ENCODE measurements at regions of chr11 and their contacts with region 1.

Region 1: GRCh38 chr11:63945477-63946163 is 6.8 kb downstream of the NAA40 start:
- DNase-seq: peak; percentile 27
- H3K4me3 ChIP-seq: no peak overlapping the region
- H3K27ac ChIP-seq: peak overlapping the region; percentile 21
- H3K27me3 ChIP-seq: no peaks in the 10 kb centered on the region
- CTCF ChIP-seq: peak; percentile 69

Region 2: GRCh38 chr11:63768237-63769043 is 177.2 kb before region 1 on chr11 and contains the start of gene ZFTA:
- CTCF ChIA-PET with region 1: interaction called, 11 read pairs
- POLR2A ChIA-PET with region 1: interaction called, 4 read pairs
- DNase-seq: no peak
- H3K4me3 ChIP-seq: peak within 1 kb of the TSS; percentile 80
- H3K27ac ChIP-seq: peak within 1 kb of the TSS; percentile 65
- H3K27me3 ChIP-seq: no peaks in the 10 kb centered on the region
- CTCF ChIP-seq: peak; percentile 41; the same call in 1 of the 2 replicates
- polyA plus RNA-seq, gene ZFTA: 8.3 and 8.6 TPM in 2 replicates

Region 3: DNA sequence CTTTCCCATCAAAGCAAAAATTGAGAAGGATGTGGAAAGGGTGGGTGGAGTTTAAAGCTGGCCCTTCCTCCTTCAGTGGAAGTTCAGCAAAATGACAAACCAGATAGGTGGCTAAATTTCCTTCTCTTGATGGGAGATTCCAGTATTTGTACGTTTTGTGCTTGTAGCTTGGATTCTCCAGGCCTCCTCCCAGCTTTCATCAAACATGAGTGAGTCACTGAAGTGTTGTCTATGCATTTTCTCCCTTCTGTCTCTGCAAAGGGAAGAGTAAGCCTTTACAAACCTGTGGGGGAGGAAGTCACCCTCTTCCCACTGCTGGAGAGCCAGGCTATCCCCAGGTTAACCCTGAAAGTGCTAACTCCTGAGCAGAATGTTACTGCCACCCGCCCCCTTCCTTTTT is 100.3 kb before region 1 on chr11:
- CTCF ChIA-PET with region 1: interaction called, 10 read pairs
- POLR2A ChIA-PET with region 1: interaction called, 3 read pairs
- DNase-seq: peak; percentile 47
- H3K4me3 ChIP-seq: no peak overlapping the region
- H3K27ac ChIP-seq: peak overlapping the region; percentile 68
- H3K27me3 ChIP-seq: no peaks in the 10 kb centered on the region
- CTCF ChIP-seq: no peak

Region 4: GRCh38 chr11:63916837-63917691 is 28.6 kb before region 1 on chr11 and contains the start of gene RCOR2:
- CTCF ChIA-PET with region 1: interaction called, 13 read pairs
- POLR2A ChIA-PET with region 1: interaction called, 4 read pairs
- DNase-seq: peak; percentile 69
- H3K4me3 ChIP-seq: peak within 1 kb of the TSS; percentile 63
- H3K27ac ChIP-seq: peak within 1 kb of the TSS; percentile 47
- H3K27me3 ChIP-seq: no peaks in the 10 kb centered on the region
- CTCF ChIP-seq: no peak
- polyA plus RNA-seq, gene RCOR2: 4.4 and 5.2 TPM in 2 replicates

Region 5: GRCh38 chr11:63961608-63962412 is 16.2 kb after region 1 on chr11:
- CTCF ChIA-PET with region 1: interaction called, 17 read pairs
- POLR2A ChIA-PET with region 1: interaction called, 4 read pairs
- DNase-seq: no peak
- H3K4me3 ChIP-seq: no peak overlapping the region
- H3K27ac ChIP-seq: peak overlapping the region; percentile 21
- H3K27me3 ChIP-seq: no peaks in the 10 kb centered on the region
- CTCF ChIP-seq: no peak

Measured in AG04450 (cell line).